ENCODE measurements at regions of chr2 and their contacts with region 1.

Region 1: DNA sequence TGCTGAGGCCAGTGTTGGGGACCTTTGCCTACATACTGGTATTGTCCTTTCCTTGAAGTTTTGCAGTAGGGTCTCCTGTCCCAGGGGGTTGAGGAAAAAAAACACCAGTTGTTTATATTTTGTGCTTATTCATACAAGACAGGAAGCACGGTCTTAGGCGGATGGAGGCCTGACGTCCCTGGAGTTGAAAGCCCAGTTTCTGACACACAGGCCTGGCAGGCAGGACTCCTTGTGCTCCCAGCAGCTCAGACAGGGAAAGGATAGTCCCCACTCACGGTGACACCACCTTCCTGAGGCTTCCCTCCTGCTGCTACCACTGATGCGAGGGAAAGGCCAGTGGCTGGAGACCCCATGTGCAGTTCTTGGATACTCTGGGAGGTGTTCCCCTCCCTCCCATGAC is 15.5 kb upstream of the SP100 start:
- DNase-seq: no peak
- H3K4me3 Mint-ChIP-seq: no peak overlapping the region
- H3K27ac Mint-ChIP-seq: no peak overlapping the region
- H3K4me1 Mint-ChIP-seq: no peaks in the 10 kb centered on the region
- H3K27me3 Mint-ChIP-seq: no peaks in the 10 kb centered on the region

Region 2: GRCh38 chr2:230362030-230362691 is 38.3 kb before region 1 on chr2:
- intact Hi-C with region 1: loop called (anchors 5 kb)
- DNase-seq: no peak
- H3K4me3 Mint-ChIP-seq: peak overlapping the region; percentile 5
- H3K27ac Mint-ChIP-seq: peak overlapping the region; percentile 73
- H3K4me1 Mint-ChIP-seq: peaks cover 29% of the 10 kb centered on the region
- H3K27me3 Mint-ChIP-seq: no peaks in the 10 kb centered on the region

Region 3: DNA sequence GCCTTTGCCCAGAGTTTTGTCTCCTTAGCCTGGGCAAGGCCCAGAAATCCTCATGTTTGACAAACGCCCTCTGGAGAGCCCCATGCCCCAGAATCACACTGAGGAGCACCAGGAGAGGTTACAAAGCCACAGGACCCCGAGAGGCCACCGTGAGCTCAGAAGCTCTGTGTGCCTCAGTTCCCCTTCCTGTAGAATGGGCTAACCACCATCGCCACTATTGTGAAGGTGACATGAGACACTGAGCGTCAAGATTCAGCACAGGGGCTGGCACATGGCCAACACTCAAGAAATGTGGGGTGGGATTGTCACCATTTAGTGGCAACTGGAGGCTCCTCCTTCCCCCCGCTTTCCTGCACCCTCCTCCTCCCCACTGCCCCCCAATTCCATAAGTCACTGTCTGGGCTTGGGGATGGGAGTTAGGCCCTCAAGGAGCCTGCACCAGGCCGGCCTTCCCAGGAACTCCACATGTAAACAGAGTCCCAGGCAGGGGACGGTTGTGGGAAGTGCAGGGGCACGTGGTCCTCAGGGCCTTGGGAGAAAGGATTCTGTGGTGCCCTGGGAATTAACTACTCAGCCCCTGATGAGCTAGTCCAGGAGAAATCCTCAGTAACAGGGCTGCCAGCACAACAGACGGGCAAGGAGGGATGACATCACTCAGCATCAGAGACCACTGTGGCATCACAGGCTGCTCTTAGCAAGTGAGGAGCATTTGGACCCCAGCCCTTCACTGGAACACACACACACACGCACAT is 1131.2 kb after region 1 on chr2:
- intact Hi-C with region 1: no loop called
- DNase-seq: no peak
- H3K4me3 Mint-ChIP-seq: no peak overlapping the region
- H3K27ac Mint-ChIP-seq: no peak overlapping the region
- H3K4me1 Mint-ChIP-seq: peaks cover 20% of the 10 kb centered on the region
- H3K27me3 Mint-ChIP-seq: peaks cover 26% of the 10 kb centered on the region

Measured in activated T-helper 1 cell treated with anti-CD3 and anti-CD28 coated beads, Interleukin-12 subunit alpha, Interleukin-12 subunit beta, Interleukin-2, Interleukin-4 antibody, amounts not matched to agents 30 ng/mL and 10 ng/mL and 1 ng/mL, durations not matched to agents 14 hours and 24 hours and 36 hours (primary cell).